BJ (cell line): ENCODE measurements at regions of chr3 and their contacts with region 1.

Region 1: DNA sequence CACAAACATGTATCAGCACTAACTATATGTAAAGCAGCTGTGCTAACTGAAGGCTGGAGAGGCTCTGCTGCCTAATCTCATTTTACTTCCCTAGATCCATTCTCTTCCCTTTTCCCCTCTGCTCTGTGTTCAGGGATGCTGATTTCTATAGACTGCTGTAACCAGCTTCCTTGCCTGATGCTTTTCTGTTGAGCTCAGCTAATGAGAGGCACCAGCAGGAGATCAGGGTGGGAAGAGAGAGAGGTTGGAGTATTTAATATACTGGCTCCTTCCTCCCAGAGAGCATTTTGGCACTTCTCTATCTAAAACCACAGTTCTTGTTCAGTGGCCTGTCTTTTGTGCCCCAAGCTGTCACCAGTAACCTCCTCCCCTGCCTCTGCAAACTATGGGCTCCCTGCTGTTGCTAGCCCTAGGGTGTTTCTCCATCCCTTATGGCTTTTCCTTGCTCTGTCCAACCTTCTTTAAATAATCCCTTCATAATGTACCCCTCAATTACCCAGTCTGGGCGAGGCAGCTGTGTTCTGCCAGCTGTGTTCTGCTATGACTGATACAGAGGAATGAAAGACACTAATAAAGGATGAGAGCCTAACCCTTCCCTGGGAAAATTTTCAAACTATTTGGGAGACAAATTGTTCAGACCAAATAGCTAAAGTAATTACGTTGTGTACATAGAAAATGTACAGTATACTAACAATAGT is 69.5 kb downstream of the CADPS start:
- DNase-seq: no peak
- H3K4me3 ChIP-seq: no peak overlapping the region
- H3K27me3 ChIP-seq: no peaks in the 10 kb centered on the region
- CTCF ChIP-seq: no peak

Region 2: GRCh38 chr3:62567097-62568021 is 238.4 kb before region 1 on chr3:
- CTCF ChIA-PET with region 1: no interaction called
- POLR2A ChIA-PET with region 1: interaction called, 19 read pairs
- DNase-seq: peak; percentile 37
- H3K4me3 ChIP-seq: no peak overlapping the region
- H3K27me3 ChIP-seq: no peaks in the 10 kb centered on the region
- CTCF ChIP-seq: no peak